ENCODE measurements at regions of chr19 and their contacts with region 1.

Region 1: GRCh38 chr19:19203012-19203856 is at the start of gene NR2C2AP:
- DNase-seq: peak; percentile 96
- ATAC-seq: peak; percentile 90
- H3K4me3 Mint-ChIP-seq: peak within 1 kb of the TSS; percentile 95
- H3K27ac Mint-ChIP-seq: peak within 1 kb of the TSS; percentile 89
- H3K4me1 Mint-ChIP-seq: peaks cover 45% of the 10 kb centered on the region
- H3K27me3 Mint-ChIP-seq: peaks cover 9% of the 10 kb centered on the region
- total RNA-seq, gene NR2C2AP: 35.6 TPM

Region 2: DNA sequence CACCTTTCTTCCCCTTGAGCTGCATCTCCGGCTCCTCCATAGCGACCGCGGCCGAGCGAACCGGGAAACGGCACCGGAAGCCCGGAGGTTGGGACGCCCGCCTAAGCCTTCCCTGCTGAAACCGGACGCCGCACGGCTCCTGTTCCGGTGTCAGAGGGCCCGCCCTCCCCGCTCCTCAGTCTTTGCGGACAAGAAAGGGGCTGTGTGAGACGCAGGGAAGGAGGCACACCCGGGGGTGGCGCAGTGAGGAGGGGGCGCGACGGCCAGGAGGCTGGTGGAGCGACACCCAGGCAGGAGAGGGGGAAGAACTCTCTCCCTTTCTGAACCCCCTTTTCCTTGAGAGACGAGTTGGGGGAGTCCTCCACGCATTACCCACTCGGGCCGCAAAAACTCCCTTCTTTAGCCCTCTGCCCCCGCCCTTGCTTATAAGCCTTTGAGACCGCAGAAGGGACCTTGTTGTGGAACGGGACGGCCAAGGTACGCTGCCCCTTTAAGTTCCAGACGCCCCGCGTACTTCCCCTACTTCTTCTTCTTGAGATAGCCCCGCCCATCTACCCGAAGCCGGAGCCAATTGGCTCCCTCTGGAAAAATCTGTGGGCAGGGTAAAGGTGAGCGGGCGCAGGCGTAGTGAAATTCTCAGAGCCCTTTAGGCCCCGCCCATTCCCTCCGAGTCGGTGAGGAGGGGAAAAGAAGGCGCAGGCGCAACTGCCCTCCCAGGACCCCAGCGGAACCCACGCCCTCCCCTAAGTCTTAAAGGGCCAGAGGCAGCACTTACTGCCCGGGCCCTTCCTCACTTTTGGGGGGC is 11.0 kb before region 1 on chr19 and contains the starts of genes BORCS8 and RFXANK:
- CTCF ChIA-PET with region 1: interaction called, 8 read pairs
- POLR2A ChIA-PET with region 1: interaction called, 55 read pairs
- DNase-seq: peak; percentile 100
- ATAC-seq: peak; percentile 91
- H3K4me3 Mint-ChIP-seq: peak within 1 kb of the TSS; percentile 87
- H3K27ac Mint-ChIP-seq: peak within 1 kb of the TSS; percentile 99
- H3K4me1 Mint-ChIP-seq: peaks cover 36% of the 10 kb centered on the region
- H3K27me3 Mint-ChIP-seq: no peaks in the 10 kb centered on the region
- total RNA-seq, gene BORCS8: 22.1 to 25.4 TPM
- total RNA-seq, gene RFXANK: 97.9 to 98.7 TPM

Region 3: GRCh38 chr19:19224852-19225494 is 21.7 kb after region 1 on chr19:
- CTCF ChIA-PET with region 1: interaction called, 10 read pairs
- POLR2A ChIA-PET with region 1: interaction called, 4 read pairs
- DNase-seq: peak; percentile 82
- ATAC-seq: peak; percentile 97
- H3K4me3 Mint-ChIP-seq: peak overlapping the region; percentile 56
- H3K27ac Mint-ChIP-seq: no peak overlapping the region
- H3K4me1 Mint-ChIP-seq: peaks cover 6% of the 10 kb centered on the region
- H3K27me3 Mint-ChIP-seq: peaks cover 12% of the 10 kb centered on the region

Measured in activated CD8-positive, alpha-beta T cell treated with anti-CD3 and anti-CD28 coated beads, Interleukin-2, amount 10 ng/mL, durations not matched to agents 7 days and 5 days (primary cell).